Activated CD4-positive, alpha-beta memory T cell treated with anti-CD3 and anti-CD28 coated beads for 36 hours (primary cell): ENCODE measurements at regions of chr10 and their contacts with region 1.

Region 1: DNA sequence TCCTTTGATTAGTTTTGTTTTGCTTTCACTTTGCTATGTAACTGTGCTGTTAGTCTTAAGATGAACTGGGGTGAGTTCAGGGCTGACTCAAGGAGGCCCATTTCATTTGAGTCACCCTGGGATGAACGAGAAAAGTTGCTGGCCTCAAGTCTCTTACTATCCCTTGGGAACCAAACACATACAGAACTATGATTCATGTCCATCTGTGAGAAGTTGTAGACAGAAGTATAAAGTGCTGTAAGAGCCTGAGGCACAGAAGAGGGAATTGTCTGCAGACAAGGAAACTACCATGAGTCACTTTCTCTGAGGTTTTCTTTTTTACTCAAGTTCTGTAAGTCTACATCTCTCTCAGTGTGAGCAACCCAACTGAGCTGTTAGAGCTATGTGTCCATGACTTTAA is 179.8 kb upstream of the CSTF2T start:
- DNase-seq: peak; percentile 54
- H3K4me3 Mint-ChIP-seq: no peak overlapping the region
- H3K27ac Mint-ChIP-seq: no peak overlapping the region
- H3K4me1 Mint-ChIP-seq: peaks cover 16% of the 10 kb centered on the region
- H3K27me3 Mint-ChIP-seq: no peaks in the 10 kb centered on the region

Region 2: GRCh38 chr10:51368939-51369338 is 510.3 kb before region 1 on chr10:
- CTCF ChIA-PET with region 1: no interaction called
- POLR2A ChIA-PET with region 1: no interaction called
- intact Hi-C with region 1: no loop called
- DNase-seq: no peak
- H3K4me3 Mint-ChIP-seq: no peak overlapping the region
- H3K27ac Mint-ChIP-seq: no peak overlapping the region
- H3K4me1 Mint-ChIP-seq: no peaks in the 10 kb centered on the region
- H3K27me3 Mint-ChIP-seq: no peaks in the 10 kb centered on the region

Region 3: GRCh38 chr10:51699475-51700227 is 179.6 kb before region 1 on chr10 and contains the start of gene CSTF2T:
- CTCF ChIA-PET with region 1: no interaction called
- POLR2A ChIA-PET with region 1: no interaction called
- intact Hi-C with region 1: loop called (anchors 1 kb)
- DNase-seq: peak; percentile 94
- H3K4me3 Mint-ChIP-seq: peak within 1 kb of the TSS; percentile 95
- H3K27ac Mint-ChIP-seq: peak within 1 kb of the TSS; percentile 100
- H3K4me1 Mint-ChIP-seq: peaks cover 48% of the 10 kb centered on the region
- H3K27me3 Mint-ChIP-seq: no peaks in the 10 kb centered on the region
- total RNA-seq, gene CSTF2T: 26.4 TPM

Region 4: GRCh38 chr10:51770698-51771097 is 108.5 kb before region 1 on chr10:
- CTCF ChIA-PET with region 1: no interaction called
- POLR2A ChIA-PET with region 1: no interaction called
- intact Hi-C with region 1: no loop called
- DNase-seq: no peak
- H3K4me3 Mint-ChIP-seq: no peak overlapping the region
- H3K27ac Mint-ChIP-seq: no peak overlapping the region
- H3K4me1 Mint-ChIP-seq: no peaks in the 10 kb centered on the region
- H3K27me3 Mint-ChIP-seq: no peaks in the 10 kb centered on the region

Region 5: DNA sequence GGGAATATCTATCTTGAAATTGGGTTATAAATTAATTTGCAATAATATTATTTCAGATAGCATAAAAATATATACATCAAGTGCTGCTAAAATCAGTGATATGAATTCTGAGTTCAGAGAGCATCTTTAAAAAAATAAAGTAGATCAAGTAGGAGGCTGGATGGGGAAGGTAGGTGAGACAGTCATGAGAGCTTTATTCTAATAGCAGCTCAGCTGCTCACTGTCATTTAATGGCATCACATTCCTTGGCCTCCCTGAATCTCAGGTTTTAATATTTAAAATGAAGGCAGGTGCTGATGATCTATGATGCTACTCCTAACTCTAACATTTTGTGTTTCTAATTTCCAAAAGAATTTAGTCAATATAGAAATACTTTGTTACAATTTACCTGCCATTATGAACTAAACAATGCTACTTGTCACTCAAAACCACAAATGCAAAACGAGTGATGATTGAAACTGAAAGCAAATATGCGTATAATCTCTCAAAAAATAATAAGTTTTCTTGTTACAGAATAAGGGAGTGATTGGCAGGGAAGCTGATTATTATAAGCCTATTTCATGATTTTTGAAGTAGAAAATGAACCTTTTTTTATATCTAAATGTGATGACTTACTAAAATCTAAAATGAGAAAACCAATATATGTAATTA is 32.3 kb before region 1 on chr10:
- CTCF ChIA-PET with region 1: no interaction called
- POLR2A ChIA-PET with region 1: no interaction called
- intact Hi-C with region 1: no loop called
- DNase-seq: no peak
- H3K4me3 Mint-ChIP-seq: no peak overlapping the region
- H3K27ac Mint-ChIP-seq: no peak overlapping the region
- H3K4me1 Mint-ChIP-seq: no peaks in the 10 kb centered on the region
- H3K27me3 Mint-ChIP-seq: peaks cover 3% of the 10 kb centered on the region

Region 6: DNA sequence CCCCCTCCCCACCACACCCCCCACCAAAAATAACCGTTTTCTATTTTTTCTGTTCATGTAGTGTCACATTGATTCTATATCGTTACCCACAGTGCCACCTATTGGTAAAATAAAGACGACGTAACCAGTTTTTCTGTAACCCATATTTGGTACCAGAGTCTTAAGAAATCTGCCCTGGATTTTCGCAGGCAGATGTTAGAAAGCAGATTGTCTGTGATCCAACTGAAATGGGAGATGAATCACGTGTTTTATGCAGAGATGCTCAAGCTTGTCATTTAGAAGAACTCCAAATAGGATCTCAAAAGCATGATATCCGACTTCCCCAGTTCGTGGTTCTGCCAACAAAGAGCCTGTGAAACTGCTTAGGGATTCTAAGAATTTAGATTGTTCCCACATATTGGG is 81.3 kb after region 1 on chr10:
- CTCF ChIA-PET with region 1: no interaction called
- POLR2A ChIA-PET with region 1: no interaction called
- intact Hi-C with region 1: no loop called
- DNase-seq: no peak
- H3K4me3 Mint-ChIP-seq: no peak overlapping the region
- H3K27ac Mint-ChIP-seq: no peak overlapping the region
- H3K4me1 Mint-ChIP-seq: no peaks in the 10 kb centered on the region
- H3K27me3 Mint-ChIP-seq: peaks cover 14% of the 10 kb centered on the region